Ascending aorta (tissue), 2 donors: ENCODE measurements at regions of chr11 and their contacts with region 1.

Region 1: GRCh38 chr11:45899448-45900173 is 7.5 kb downstream of the FREY1 start:
- DNase-seq: peak; percentile 62 to 91
- H3K4me3 ChIP-seq: peak overlapping the region; percentile 70 to 74
- H3K27ac ChIP-seq: peak overlapping the region; percentile 49 to 65
- H3K4me1 ChIP-seq: peaks cover 0 to 20% of the 10 kb centered on the region in 2 donors
- H3K27me3 ChIP-seq: no peaks in the 10 kb centered on the region
- CTCF ChIP-seq: no peak

Region 2: DNA sequence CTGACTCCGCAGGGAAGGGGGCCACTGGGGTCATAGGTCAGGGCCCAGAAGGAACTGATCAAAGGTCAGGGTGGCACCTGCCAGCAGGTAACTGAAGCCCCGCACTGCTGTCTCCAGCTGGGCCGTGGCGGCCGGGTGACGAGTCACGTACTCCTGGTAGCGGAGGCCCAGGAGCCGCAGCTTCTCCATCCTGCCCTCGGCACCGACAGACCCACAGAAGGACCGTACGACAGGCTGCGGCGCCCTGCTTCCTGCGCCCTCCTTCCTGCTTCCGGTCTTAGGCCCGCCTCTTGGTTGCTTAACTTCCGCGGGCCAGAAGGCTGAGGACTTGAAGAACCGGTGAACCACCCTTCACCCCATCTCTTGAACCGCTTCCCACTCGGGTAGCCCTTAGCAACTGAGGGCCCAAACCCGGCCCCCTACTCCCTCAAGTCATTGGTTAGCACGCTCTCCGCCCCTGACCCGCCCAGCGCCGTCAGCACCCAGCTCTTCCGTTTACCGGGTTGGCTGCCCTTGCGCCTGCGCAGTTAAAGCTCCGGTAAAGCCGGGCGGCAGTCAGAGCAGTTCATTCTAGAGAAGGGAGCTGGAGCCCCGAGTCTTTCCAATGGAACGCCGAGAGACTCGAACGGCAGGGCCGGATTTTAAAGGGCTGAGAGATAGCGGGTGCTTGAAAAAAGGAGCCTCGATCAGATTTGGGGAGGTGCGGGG is 18.2 kb after region 1 on chr11 and contains the start of gene PEX16:
- intact Hi-C with region 1: loop called (anchors 1 kb)
- DNase-seq: peak; percentile 93 to 99
- H3K4me3 ChIP-seq: peak within 1 kb of the TSS; percentile 67 to 91
- H3K27ac ChIP-seq: peak within 1 kb of the TSS; percentile 90 to 91
- H3K4me1 ChIP-seq: peaks cover 5 to 18% of the 10 kb centered on the region in 2 donors
- H3K27me3 ChIP-seq: peaks cover 11% of the 10 kb centered on the region
- CTCF ChIP-seq: no peak
- total RNA-seq, gene PEX16: 77.9 TPM

Region 3: GRCh38 chr11:46121724-46122477 is 222.3 kb after region 1 on chr11:
- intact Hi-C with region 1: no loop called
- DNase-seq: peak; percentile 30 to 87
- H3K4me3 ChIP-seq: peak overlapping the region; percentile 69 to 95
- H3K27ac ChIP-seq: peak overlapping the region; percentile 58 to 95
- H3K4me1 ChIP-seq: peaks cover 0 to 15% of the 10 kb centered on the region in 2 donors
- H3K27me3 ChIP-seq: no peaks in the 10 kb centered on the region
- CTCF ChIP-seq: no peak